ENCODE measurements at regions of chr5 and their contacts with region 1.

Region 1: GRCh38 chr5:81904861-81905260 is 67.0 kb upstream of the ATG10 start:
- DNase-seq: peak; percentile 19 to 63
- H3K4me3 ChIP-seq: no peak overlapping the region
- H3K27ac ChIP-seq: no peak overlapping the region
- H3K4me1 ChIP-seq: peaks cover 12% of the 10 kb centered on the region; the same call in 1 of the 2 replicates
- H3K27me3 ChIP-seq: no peaks in the 10 kb centered on the region
- CTCF ChIP-seq: no peak

Region 2: DNA sequence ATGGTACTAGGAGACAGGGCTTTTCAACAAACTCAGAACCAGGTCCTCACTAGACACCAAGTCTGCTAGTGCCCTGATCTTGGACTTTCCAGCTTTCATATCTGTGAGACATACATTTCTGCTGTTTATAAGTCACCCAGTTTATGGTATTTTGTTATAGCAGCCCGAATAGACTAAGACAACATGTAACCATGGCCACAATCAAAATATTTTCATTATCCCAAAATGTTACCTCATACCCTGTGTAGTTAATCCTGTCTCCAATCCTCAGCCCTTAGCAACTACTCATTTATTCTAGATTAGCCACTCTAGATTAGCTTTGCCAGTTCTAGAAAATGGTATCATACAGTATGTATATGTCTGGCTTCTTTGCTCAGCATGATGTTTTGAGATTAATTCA is 60.7 kb after region 1 on chr5:
- CTCF ChIA-PET with region 1: no interaction called
- POLR2A ChIA-PET with region 1: interaction called, 10 read pairs
- intact Hi-C with region 1: no loop called
- DNase-seq: no peak
- H3K4me3 ChIP-seq: no peak overlapping the region
- H3K27ac ChIP-seq: no peak overlapping the region
- H3K4me1 ChIP-seq: peaks cover 10% of the 10 kb centered on the region
- H3K27me3 ChIP-seq: no peaks in the 10 kb centered on the region
- CTCF ChIP-seq: no peak